IMR-90 (cell line): ENCODE measurements at regions of chr6 and their contacts with region 1.

Region 1: GRCh38 chr6:67328269-67328668 is 1306.8 kb upstream of the ADGRB3 start:
- DNase-seq: no peak
- ATAC-seq: no peak
- H3K4me3 ChIP-seq: no peak overlapping the region
- H3K27ac ChIP-seq: no peak overlapping the region
- H3K4me1 ChIP-seq: no peaks in the 10 kb centered on the region
- H3K27me3 ChIP-seq: no peaks in the 10 kb centered on the region
- CTCF ChIP-seq: no peak
- POLR2A ChIP-seq: no peak
- RAD21 ChIP-seq: no peak

Region 2: DNA sequence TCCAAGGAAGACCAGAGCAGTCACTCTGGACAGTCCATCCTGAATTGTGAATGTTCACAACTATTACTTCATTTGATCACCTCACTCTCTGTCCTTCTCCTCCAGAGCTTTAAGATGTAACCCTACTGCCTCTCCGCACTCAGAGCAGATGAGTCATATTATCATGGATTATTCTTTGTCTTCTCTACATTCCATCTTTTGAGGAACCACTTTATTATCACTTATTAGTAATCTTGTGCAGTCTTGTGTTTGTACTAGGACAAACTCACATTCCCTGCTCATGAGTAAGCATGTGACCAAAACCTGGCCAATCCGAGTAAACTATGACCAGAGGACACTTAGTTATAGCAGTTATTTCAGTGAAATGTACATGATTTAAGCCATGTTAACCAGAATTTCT is 905.4 kb after region 1 on chr6:
- CTCF ChIA-PET with region 1: no interaction called
- POLR2A ChIA-PET with region 1: no interaction called
- dilution Hi-C with region 1: no loop called
- in situ Hi-C with region 1: no loop called
- intact Hi-C with region 1: loop called (anchors 5 kb)
- DNase-seq: peak; percentile 1
- ATAC-seq: no peak
- H3K4me3 ChIP-seq: no peak overlapping the region
- H3K27ac ChIP-seq: no peak overlapping the region
- H3K4me1 ChIP-seq: no peaks in the 10 kb centered on the region
- H3K27me3 ChIP-seq: no peaks in the 10 kb centered on the region
- CTCF ChIP-seq: no peak
- POLR2A ChIP-seq: no peak
- RAD21 ChIP-seq: no peak